KBM-7 (cell line): ENCODE measurements at regions of chr4 and their contacts with region 1.

Region 1: GRCh38 chr4:150867148-150867547 is 147.9 kb downstream of the LRBA start:
- DNase-seq: peak; percentile 80

Region 2: GRCh38 chr4:149980941-149981340 is 886.2 kb before region 1 on chr4:
- in situ Hi-C with region 1: loop called (anchors 25 kb)
- DNase-seq: peak; percentile 54

Region 3: DNA sequence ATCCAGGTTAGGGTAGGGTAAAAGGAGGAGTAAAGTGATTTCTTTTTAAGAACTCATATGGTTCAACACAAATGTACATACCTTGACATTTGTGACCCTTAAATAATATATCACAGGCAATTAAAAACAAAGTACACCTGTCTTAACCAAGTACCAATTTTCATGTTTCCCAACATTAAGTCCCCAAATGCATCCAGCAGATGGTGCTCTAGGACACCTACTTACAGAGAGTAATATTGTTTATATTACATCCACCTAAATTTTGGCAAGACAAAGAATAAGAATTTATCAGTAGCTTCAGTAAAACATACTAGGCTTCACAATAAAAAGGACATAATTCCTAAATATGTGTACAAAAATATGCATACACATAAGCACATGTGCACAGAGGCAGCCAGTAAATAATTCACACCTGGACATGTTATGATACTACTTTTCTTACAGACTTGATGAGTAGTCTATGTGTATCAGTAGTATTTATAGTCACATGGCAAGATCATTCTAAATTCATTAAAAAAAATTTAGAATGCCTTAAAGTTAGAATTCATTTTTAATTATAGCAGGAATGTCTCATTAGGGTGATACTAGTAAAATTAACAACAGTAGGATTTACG is 569.2 kb before region 1 on chr4:
- in situ Hi-C with region 1: loop called (anchors 25 kb)
- DNase-seq: peak; percentile 37